ENCODE measurements at regions of chr7 and their contacts with region 1.

Region 1: GRCh38 chr7:5780801-5781496 is 514 bp downstream of the RNF216 start:
- DNase-seq: no peak
- H3K4me3 ChIP-seq: peak overlapping the region; percentile 77
- H3K27ac ChIP-seq: peak overlapping the region; percentile 52
- H3K27me3 ChIP-seq: no peaks in the 10 kb centered on the region
- CTCF ChIP-seq: no peak

Region 2: GRCh38 chr7:5750026-5750653 is 30.8 kb before region 1 on chr7:
- CTCF ChIA-PET with region 1: interaction called, 12 read pairs
- POLR2A ChIA-PET with region 1: no interaction called
- DNase-seq: no peak
- H3K4me3 ChIP-seq: no peak overlapping the region
- H3K27ac ChIP-seq: no peak overlapping the region
- H3K27me3 ChIP-seq: no peaks in the 10 kb centered on the region
- CTCF ChIP-seq: no peak

Region 3: DNA sequence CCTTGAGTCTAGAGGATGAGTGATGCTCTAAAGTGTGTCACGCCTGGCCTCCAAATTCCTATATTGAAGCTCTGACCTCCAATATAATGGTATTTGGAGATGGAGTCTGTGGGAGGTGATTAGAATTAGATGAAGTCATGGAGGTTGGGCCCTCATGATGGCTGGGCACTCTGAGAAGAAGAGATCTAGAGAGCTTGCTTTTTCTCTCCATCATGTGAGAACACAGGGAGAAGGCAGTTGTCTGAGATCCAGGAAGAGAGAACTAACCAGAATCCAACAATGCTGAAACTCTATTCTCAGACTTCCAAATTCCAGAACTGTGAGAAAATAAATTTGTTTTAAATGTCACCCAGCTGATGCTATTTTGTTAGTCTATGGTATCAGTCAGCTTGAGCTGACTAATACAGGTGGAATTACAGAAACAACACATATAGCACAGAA is 14.6 kb before region 1 on chr7:
- CTCF ChIA-PET with region 1: interaction called, 11 read pairs
- POLR2A ChIA-PET with region 1: interaction called, 7 read pairs
- DNase-seq: peak; percentile 47
- H3K4me3 ChIP-seq: no peak overlapping the region
- H3K27ac ChIP-seq: peak overlapping the region; percentile 85
- H3K27me3 ChIP-seq: no peaks in the 10 kb centered on the region
- CTCF ChIP-seq: no peak

Measured in AG04450 (cell line).